Activated CD8-positive, alpha-beta T cell treated with anti-CD3 and anti-CD28 coated beads for 36 hours (primary cell): ENCODE measurements at regions of chr11 and their contacts with region 1.

Region 1: GRCh38 chr11:64331557-64332371 is 8.2 kb upstream of the CCDC88B start:
- DNase-seq: peak; percentile 96
- ATAC-seq: peak; percentile 89
- H3K4me3 Mint-ChIP-seq: peak overlapping the region; percentile 0
- H3K27ac Mint-ChIP-seq: peak overlapping the region; percentile 75
- H3K4me1 Mint-ChIP-seq: peaks cover 24% of the 10 kb centered on the region
- H3K27me3 Mint-ChIP-seq: no peaks in the 10 kb centered on the region
- CTCF ChIP-seq: peak; percentile 67

Region 2: GRCh38 chr11:64341851-64342791 is 10.4 kb after region 1 on chr11:
- CTCF ChIA-PET with region 1: interaction called, 10 read pairs
- POLR2A ChIA-PET with region 1: interaction called, 6 read pairs
- intact Hi-C with region 1: no loop called
- DNase-seq: peak; percentile 94
- ATAC-seq: peak; percentile 75
- H3K4me3 Mint-ChIP-seq: peak overlapping the region; percentile 84
- H3K27ac Mint-ChIP-seq: no peak overlapping the region
- H3K4me1 Mint-ChIP-seq: peaks cover 36% of the 10 kb centered on the region
- H3K27me3 Mint-ChIP-seq: no peaks in the 10 kb centered on the region
- CTCF ChIP-seq: peak; percentile 44

Region 3: GRCh38 chr11:64358907-64359711 is 27.3 kb after region 1 on chr11 and contains the start of gene RPS6KA4:
- CTCF ChIA-PET with region 1: interaction called, 12 read pairs
- POLR2A ChIA-PET with region 1: interaction called, 5 read pairs
- intact Hi-C with region 1: no loop called
- DNase-seq: peak; percentile 64
- ATAC-seq: peak; percentile 68
- H3K4me3 Mint-ChIP-seq: peak within 1 kb of the TSS; percentile 79
- H3K27ac Mint-ChIP-seq: peak within 1 kb of the TSS; percentile 87
- H3K4me1 Mint-ChIP-seq: peaks cover 48% of the 10 kb centered on the region
- H3K27me3 Mint-ChIP-seq: no peaks in the 10 kb centered on the region
- CTCF ChIP-seq: no peak
- total RNA-seq, gene RPS6KA4: 24.6 to 26.0 TPM